ENCODE measurements at regions of chr5 and their contacts with region 1.

Region 1: GRCh38 chr5:14664302-14665100 is at the start of gene OTULIN:
- DNase-seq: peak; percentile 85
- H3K4me3 Mint-ChIP-seq: peak within 1 kb of the TSS; percentile 96
- H3K27ac Mint-ChIP-seq: peak within 1 kb of the TSS; percentile 98
- H3K4me1 Mint-ChIP-seq: peaks cover 54% of the 10 kb centered on the region
- H3K27me3 Mint-ChIP-seq: no peaks in the 10 kb centered on the region
- total RNA-seq, gene OTULIN: 59.4 and 62.1 TPM in 2 replicates

Region 2: GRCh38 chr5:14142827-14143548 is 521.5 kb before region 1 on chr5 and contains the start of gene TRIO:
- intact Hi-C with region 1: loop called (anchors 10 kb)
- DNase-seq: peak; percentile 66
- H3K4me3 Mint-ChIP-seq: peak within 1 kb of the TSS; percentile 79
- H3K27ac Mint-ChIP-seq: peak within 1 kb of the TSS; percentile 58
- H3K4me1 Mint-ChIP-seq: peaks cover 10% of the 10 kb centered on the region
- H3K27me3 Mint-ChIP-seq: peaks cover 53% of the 10 kb centered on the region
- total RNA-seq, gene TRIO: 28.7 and 30.1 TPM in 2 replicates

Region 3: DNA sequence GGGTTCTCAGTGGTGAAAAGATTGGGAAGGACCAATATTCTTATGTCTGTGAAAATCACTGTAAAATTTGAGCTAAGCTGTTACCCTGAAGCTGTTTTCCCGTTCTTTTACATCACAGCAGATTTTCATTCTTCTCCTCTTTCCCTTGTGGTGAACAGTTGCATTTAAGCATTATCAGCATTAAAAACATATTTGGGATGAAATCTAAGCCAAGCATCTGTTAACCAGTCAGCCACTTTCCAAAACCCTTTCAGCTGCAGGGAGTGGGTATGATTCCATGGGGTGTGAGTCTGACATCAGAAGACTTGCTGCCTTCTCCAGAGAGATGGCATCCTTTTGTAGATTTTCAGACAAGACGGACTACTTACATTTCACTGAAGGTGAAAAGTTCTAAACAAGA is 424.1 kb before region 1 on chr5:
- intact Hi-C with region 1: no loop called
- DNase-seq: no peak
- H3K4me3 Mint-ChIP-seq: no peak overlapping the region
- H3K27ac Mint-ChIP-seq: no peak overlapping the region
- H3K4me1 Mint-ChIP-seq: peaks cover 2% of the 10 kb centered on the region
- H3K27me3 Mint-ChIP-seq: peaks cover 7% of the 10 kb centered on the region

Region 4: GRCh38 chr5:14415024-14415697 is 249.3 kb before region 1 on chr5:
- intact Hi-C with region 1: loop called (anchors 2 kb)
- DNase-seq: no peak
- H3K4me3 Mint-ChIP-seq: peak overlapping the region; percentile 43
- H3K27ac Mint-ChIP-seq: peak overlapping the region; percentile 91
- H3K4me1 Mint-ChIP-seq: peaks cover 69% of the 10 kb centered on the region
- H3K27me3 Mint-ChIP-seq: peaks cover 1% of the 10 kb centered on the region

Region 5: GRCh38 chr5:14581333-14581890 is 83.1 kb before region 1 on chr5 and contains the start of gene OTULINL:
- intact Hi-C with region 1: loop called (anchors 1 kb)
- DNase-seq: peak; percentile 78
- H3K4me3 Mint-ChIP-seq: peak within 1 kb of the TSS; percentile 78
- H3K27ac Mint-ChIP-seq: peak within 1 kb of the TSS; percentile 28
- H3K4me1 Mint-ChIP-seq: peaks cover 23% of the 10 kb centered on the region
- H3K27me3 Mint-ChIP-seq: peaks cover 22% of the 10 kb centered on the region
- total RNA-seq, gene OTULINL: 17.0 and 20.9 TPM in 2 replicates

Region 6: GRCh38 chr5:14675865-14676300 is 11.4 kb after region 1 on chr5:
- intact Hi-C with region 1: loop called (anchors 1 kb)
- DNase-seq: no peak
- H3K4me3 Mint-ChIP-seq: peak overlapping the region; percentile 42
- H3K27ac Mint-ChIP-seq: peak overlapping the region; percentile 88
- H3K4me1 Mint-ChIP-seq: peaks cover 66% of the 10 kb centered on the region
- H3K27me3 Mint-ChIP-seq: no peaks in the 10 kb centered on the region

Region 7: GRCh38 chr5:14706615-14707021 is 42.1 kb after region 1 on chr5:
- intact Hi-C with region 1: loop called (anchors 1 kb)
- DNase-seq: peak; percentile 46
- H3K4me3 Mint-ChIP-seq: peak overlapping the region; percentile 79
- H3K27ac Mint-ChIP-seq: peak overlapping the region; percentile 99
- H3K4me1 Mint-ChIP-seq: peaks cover 76% of the 10 kb centered on the region
- H3K27me3 Mint-ChIP-seq: no peaks in the 10 kb centered on the region

Measured in activated T-helper 2 cell treated with anti-CD3 and anti-CD28 coated beads, Interferon-gamma antibody, Interleukin-2, Interleukin-4, amounts not matched to agents 10 μg/mL and 5 μg/mL and 100 μg/mL, durations not matched to agents 14 hours and 24 hours and 36 hours (primary cell).